K562 (cell line): ENCODE measurements at regions of chr1 and their contacts with region 1.

Region 1: GRCh38 chr1:39091845-39092645 is 65.9 kb downstream of the NDUFS5 start:
- DNase-seq: peak; percentile 40 to 87 (median 48)
- ATAC-seq: peak; percentile 92
- H3K4me3 ChIP-seq: no peak overlapping the region
- H3K27ac ChIP-seq: no peak overlapping the region
- H3K4me1 ChIP-seq: peaks cover 2 to 5% of the 10 kb centered on the region in 2 experiments; a peak in 2 of 5 replicates
- H3K27me3 ChIP-seq: no peaks in the 10 kb centered on the region
- CTCF ChIP-seq: peak; percentile 83 to 92 (median 89)
- EP300 ChIP-seq: no peak
- POLR2A ChIP-seq: no peak
- RAD21 ChIP-seq: peak; percentile 75 to 95

Region 2: GRCh38 chr1:38608202-38608864 is 483.7 kb before region 1 on chr1:
- CTCF ChIA-PET with region 1: no interaction called
- POLR2A ChIA-PET with region 1: no interaction called
- in situ Hi-C with region 1: no loop called
- intact Hi-C with region 1: loop called (anchors 5 kb)
- DNase-seq: peak; percentile 73 to 77 (median 74)
- ATAC-seq: peak; percentile 95
- H3K4me3 ChIP-seq: no peak overlapping the region
- H3K27ac ChIP-seq: no peak overlapping the region
- H3K4me1 ChIP-seq: peaks cover 6 to 10% of the 10 kb centered on the region in 2 experiments; a peak in 4 of 5 replicates
- H3K27me3 ChIP-seq: peaks cover 0 to 18% of the 10 kb centered on the region in 2 experiments; a peak in 2 of 5 replicates
- CTCF ChIP-seq: peak; percentile 84 to 87 (median 86)
- EP300 ChIP-seq: no peak
- POLR2A ChIP-seq: no peak
- RAD21 ChIP-seq: peak; percentile 82 to 88

Region 3: DNA sequence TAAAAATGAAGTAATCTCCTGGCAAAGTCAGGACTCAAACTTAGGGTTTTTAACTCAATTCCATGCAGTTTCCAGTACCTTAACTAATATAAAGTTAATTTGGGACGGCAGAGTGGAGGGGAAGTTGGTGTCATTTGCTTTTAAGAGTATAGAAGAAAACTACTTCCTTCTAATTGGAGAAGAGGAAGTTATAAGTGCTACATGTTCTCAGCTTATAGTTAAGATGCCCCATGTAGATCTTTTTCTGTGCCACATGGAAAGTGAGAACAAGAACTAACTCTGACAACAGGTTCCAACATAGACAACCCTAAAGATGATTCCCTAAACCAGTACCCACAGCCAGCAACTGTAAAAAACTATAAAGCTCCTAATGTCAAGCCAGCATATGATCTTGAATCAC is 244.0 kb before region 1 on chr1:
- CTCF ChIA-PET with region 1: no interaction called
- POLR2A ChIA-PET with region 1: no interaction called
- in situ Hi-C with region 1: no loop called
- intact Hi-C with region 1: loop called (anchors 5 kb)
- DNase-seq: no peak
- ATAC-seq: no peak
- H3K4me3 ChIP-seq: no peak overlapping the region
- H3K27ac ChIP-seq: no peak overlapping the region
- H3K4me1 ChIP-seq: no peaks in the 10 kb centered on the region
- H3K27me3 ChIP-seq: no peaks in the 10 kb centered on the region
- CTCF ChIP-seq: no peak
- EP300 ChIP-seq: no peak
- POLR2A ChIP-seq: no peak
- RAD21 ChIP-seq: no peak

Region 4: GRCh38 chr1:38919130-38919529 is 172.9 kb before region 1 on chr1:
- CTCF ChIA-PET with region 1: no interaction called
- POLR2A ChIA-PET with region 1: no interaction called
- in situ Hi-C with region 1: no loop called
- intact Hi-C with region 1: loop called (anchors 2 kb)
- DNase-seq: peak in 1 of 4 experiments; percentile 23
- ATAC-seq: peak; percentile 48
- H3K4me3 ChIP-seq: no peak overlapping the region
- H3K27ac ChIP-seq: no peak overlapping the region
- H3K4me1 ChIP-seq: peaks cover 22 to 28% of the 10 kb centered on the region in 2 experiments; a peak in 4 of 5 replicates
- H3K27me3 ChIP-seq: no peaks in the 10 kb centered on the region
- CTCF ChIP-seq: peak; percentile 17 to 44 (median 20); a peak in 2 of 6 replicates
- EP300 ChIP-seq: no peak
- POLR2A ChIP-seq: no peak
- RAD21 ChIP-seq: peak in 1 of 2 experiments; percentile 42; a peak in 1 of 4 replicates

Region 5: DNA sequence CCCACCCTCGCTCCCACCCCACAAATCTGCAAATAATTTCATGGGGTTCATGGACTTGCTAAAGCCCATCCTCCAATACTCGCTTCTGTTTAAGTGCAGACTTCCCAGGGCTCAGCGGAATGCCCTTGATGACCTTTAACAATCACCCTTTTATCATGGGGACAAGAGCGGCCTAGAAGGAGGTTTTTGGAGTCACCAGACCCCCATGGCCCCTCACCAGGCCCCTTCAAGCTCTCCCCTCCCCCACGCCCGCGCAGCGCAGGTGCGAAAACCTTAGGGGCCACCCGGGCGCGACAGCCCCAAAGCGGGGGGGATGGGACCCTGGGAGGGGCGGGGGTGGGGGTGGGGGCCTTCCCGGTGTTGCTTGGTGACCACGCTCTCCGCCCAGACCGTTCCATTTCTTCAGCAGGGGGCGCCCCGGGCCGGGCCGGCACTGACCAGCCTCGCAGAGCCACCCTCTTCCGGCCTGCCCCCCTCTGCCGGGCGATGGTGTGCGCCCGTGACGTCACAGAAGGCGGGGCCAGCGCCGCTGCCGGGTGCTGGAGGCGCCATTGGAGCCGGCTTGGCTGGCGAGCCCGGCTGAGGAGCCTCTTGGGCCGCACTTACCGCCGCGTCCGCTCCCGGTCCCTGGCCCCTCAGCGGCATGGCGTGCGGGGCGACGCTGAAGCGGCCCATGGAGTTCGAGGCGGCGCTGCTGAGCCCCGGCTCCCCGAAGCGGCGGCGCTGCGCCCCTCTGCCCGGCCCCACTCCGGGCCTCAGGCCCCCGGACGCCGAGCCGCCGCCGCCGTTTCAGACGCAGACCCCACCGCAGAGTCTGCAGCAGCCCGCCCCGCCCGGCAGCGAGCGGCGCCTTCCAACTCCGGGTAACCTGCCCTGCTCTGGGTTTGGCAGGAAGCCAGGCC is 101.1 kb before region 1 on chr1 and contains the start of gene AKIRIN1:
- CTCF ChIA-PET with region 1: no interaction called
- POLR2A ChIA-PET with region 1: no interaction called
- in situ Hi-C with region 1: no loop called
- intact Hi-C with region 1: loop called (anchors 1 kb)
- DNase-seq: peak; percentile 99
- ATAC-seq: peak; percentile 94
- H3K4me3 ChIP-seq: peak within 1 kb of the TSS; percentile 99
- H3K27ac ChIP-seq: peak within 1 kb of the TSS; percentile 90
- H3K4me1 ChIP-seq: peaks cover 0 to 17% of the 10 kb centered on the region in 2 experiments; a peak in 3 of 5 replicates
- H3K27me3 ChIP-seq: no peaks in the 10 kb centered on the region
- CTCF ChIP-seq: peak in 2 of 3 experiments; percentile 5 to 11; a peak in 1 of 6 replicates
- EP300 ChIP-seq: peak; percentile 22; the same call in 1 of the 2 replicates
- POLR2A ChIP-seq: peak; percentile 94
- RAD21 ChIP-seq: 0 out of 4 replicates have a peak, but pooled peaks of 1 of the 2 experiments have one; percentile 13
- polyA plus RNA-seq, gene AKIRIN1: 11.5 to 17.6 TPM

Region 6: GRCh38 chr1:39081266-39082009 is 10.6 kb before region 1 on chr1:
- CTCF ChIA-PET with region 1: no interaction called
- POLR2A ChIA-PET with region 1: interaction called, 14 read pairs
- in situ Hi-C with region 1: no loop called
- intact Hi-C with region 1: no loop called
- DNase-seq: peak; percentile 62 to 75 (median 68)
- ATAC-seq: peak; percentile 80
- H3K4me3 ChIP-seq: peak overlapping the region; percentile 47
- H3K27ac ChIP-seq: no peak overlapping the region
- H3K4me1 ChIP-seq: peaks cover 0 to 25% of the 10 kb centered on the region in 2 experiments; a peak in 3 of 5 replicates
- H3K27me3 ChIP-seq: peaks cover 22 to 28% of the 10 kb centered on the region in 2 experiments
- CTCF ChIP-seq: peak in 1 of 3 experiments; percentile 24; a peak in 1 of 6 replicates
- EP300 ChIP-seq: no peak
- POLR2A ChIP-seq: no peak
- RAD21 ChIP-seq: peak in 1 of 2 experiments; percentile 18; a peak in 1 of 4 replicates

Region 7: DNA sequence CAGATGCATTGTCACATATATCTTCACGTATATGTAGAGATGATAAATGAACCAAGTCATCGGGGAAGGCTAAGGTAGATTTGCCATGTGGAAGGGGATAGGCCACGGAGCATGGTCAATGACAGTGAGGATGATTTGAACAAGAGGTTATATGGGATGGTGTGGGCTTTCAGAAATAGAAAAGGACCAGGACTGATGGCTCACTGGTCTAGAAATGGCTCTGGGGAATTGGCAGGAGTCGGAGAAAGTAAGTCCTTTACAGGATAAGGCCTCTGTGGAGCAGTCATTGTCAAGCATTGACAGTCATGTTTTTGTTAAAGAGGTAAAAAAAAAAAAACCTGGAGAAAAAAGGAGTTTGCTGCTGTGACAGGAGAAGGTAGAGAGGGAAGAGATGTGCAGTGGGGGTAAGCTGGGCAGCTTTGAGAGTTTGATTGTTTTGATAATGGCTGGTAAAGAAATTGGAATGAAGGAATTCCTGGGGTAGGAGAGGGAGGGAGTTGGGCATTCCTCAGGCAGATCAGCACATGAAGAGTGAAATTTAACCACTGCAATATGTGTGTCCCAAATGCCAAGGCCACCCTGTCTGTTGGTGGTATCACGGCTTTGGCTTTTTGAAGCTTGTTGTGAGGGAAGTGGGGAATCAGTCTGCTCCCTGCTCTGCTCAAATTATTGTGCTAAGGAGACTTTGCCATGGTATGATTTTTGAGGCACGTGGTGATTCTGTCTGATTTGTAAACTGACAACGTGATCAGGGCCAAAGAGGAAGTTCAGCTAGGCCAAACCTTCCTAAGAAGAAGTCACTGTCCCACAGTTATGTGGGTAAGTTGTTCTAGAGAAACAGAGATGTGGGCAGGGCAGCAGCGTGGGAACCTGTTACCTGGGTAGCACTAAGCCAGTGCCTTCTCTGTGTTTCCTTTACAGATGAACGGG is 138.5 kb after region 1 on chr1:
- CTCF ChIA-PET with region 1: no interaction called
- POLR2A ChIA-PET with region 1: no interaction called
- in situ Hi-C with region 1: no loop called
- intact Hi-C with region 1: no loop called
- DNase-seq: no peak
- ATAC-seq: peak; percentile 61
- H3K4me3 ChIP-seq: no peak overlapping the region
- H3K27ac ChIP-seq: peak overlapping the region; percentile 12; the same call in 1 of the 3 replicates
- H3K4me1 ChIP-seq: peaks cover 0 to 15% of the 10 kb centered on the region in 2 experiments; a peak in 3 of 5 replicates
- H3K27me3 ChIP-seq: no peaks in the 10 kb centered on the region
- CTCF ChIP-seq: no peak
- EP300 ChIP-seq: no peak
- POLR2A ChIP-seq: no peak
- RAD21 ChIP-seq: no peak